PC-3 (cell line): ENCODE measurements at regions of chr10 and their contacts with region 1.

Region 1: GRCh38 chr10:37754538-37755323 is 102.7 kb downstream of the ZNF248 start:
- DNase-seq: peak; percentile 97
- ATAC-seq: peak; percentile 92
- H3K4me3 ChIP-seq: no peak overlapping the region
- H3K27ac ChIP-seq: no peak overlapping the region
- H3K4me1 ChIP-seq: peaks cover 12% of the 10 kb centered on the region; the same call in 1 of the 2 replicates
- H3K27me3 ChIP-seq: no peaks in the 10 kb centered on the region
- CTCF ChIP-seq: peak; percentile 100

Region 2: GRCh38 chr10:37434091-37434490 is 320.6 kb before region 1 on chr10:
- CTCF ChIA-PET with region 1: interaction called, 19 read pairs
- POLR2A ChIA-PET with region 1: no interaction called
- intact Hi-C with region 1: loop called (anchors 1 kb)
- DNase-seq: peak; percentile 87
- ATAC-seq: peak; percentile 90
- H3K4me3 ChIP-seq: no peak overlapping the region
- H3K27ac ChIP-seq: no peak overlapping the region
- H3K4me1 ChIP-seq: no peaks in the 10 kb centered on the region
- H3K27me3 ChIP-seq: no peaks in the 10 kb centered on the region
- CTCF ChIP-seq: peak; percentile 98

Region 3: GRCh38 chr10:37495415-37495814 is 259.3 kb before region 1 on chr10:
- CTCF ChIA-PET with region 1: interaction called, 30 read pairs
- POLR2A ChIA-PET with region 1: no interaction called
- intact Hi-C with region 1: no loop called
- DNase-seq: peak; percentile 94
- ATAC-seq: peak; percentile 94
- H3K4me3 ChIP-seq: no peak overlapping the region
- H3K27ac ChIP-seq: no peak overlapping the region
- H3K4me1 ChIP-seq: peaks cover 2% of the 10 kb centered on the region
- H3K27me3 ChIP-seq: no peaks in the 10 kb centered on the region
- CTCF ChIP-seq: peak; percentile 98

Region 4: GRCh38 chr10:37707832-37708578 is 46.7 kb before region 1 on chr10:
- CTCF ChIA-PET with region 1: interaction called, 9 read pairs
- POLR2A ChIA-PET with region 1: no interaction called
- intact Hi-C with region 1: loop called (anchors 2 kb)
- DNase-seq: peak; percentile 44
- ATAC-seq: peak; percentile 51
- H3K4me3 ChIP-seq: no peak overlapping the region
- H3K27ac ChIP-seq: no peak overlapping the region
- H3K4me1 ChIP-seq: peaks cover 6% of the 10 kb centered on the region
- H3K27me3 ChIP-seq: no peaks in the 10 kb centered on the region
- CTCF ChIP-seq: peak; percentile 62; the same call in 1 of the 2 replicates

Region 5: GRCh38 chr10:37789590-37789989 is 34.9 kb after region 1 on chr10:
- CTCF ChIA-PET with region 1: interaction called, 14 read pairs
- POLR2A ChIA-PET with region 1: no interaction called
- intact Hi-C with region 1: loop called (anchors 1 kb)
- DNase-seq: peak; percentile 100
- ATAC-seq: peak; percentile 95
- H3K4me3 ChIP-seq: peak overlapping the region; percentile 37; the same call in 1 of the 2 replicates
- H3K27ac ChIP-seq: peak overlapping the region; percentile 80
- H3K4me1 ChIP-seq: peaks cover 27% of the 10 kb centered on the region
- H3K27me3 ChIP-seq: no peaks in the 10 kb centered on the region
- CTCF ChIP-seq: no peak